WTC11 (cell line): ENCODE measurements at regions of chr1 and their contacts with region 1.

Region 1: DNA sequence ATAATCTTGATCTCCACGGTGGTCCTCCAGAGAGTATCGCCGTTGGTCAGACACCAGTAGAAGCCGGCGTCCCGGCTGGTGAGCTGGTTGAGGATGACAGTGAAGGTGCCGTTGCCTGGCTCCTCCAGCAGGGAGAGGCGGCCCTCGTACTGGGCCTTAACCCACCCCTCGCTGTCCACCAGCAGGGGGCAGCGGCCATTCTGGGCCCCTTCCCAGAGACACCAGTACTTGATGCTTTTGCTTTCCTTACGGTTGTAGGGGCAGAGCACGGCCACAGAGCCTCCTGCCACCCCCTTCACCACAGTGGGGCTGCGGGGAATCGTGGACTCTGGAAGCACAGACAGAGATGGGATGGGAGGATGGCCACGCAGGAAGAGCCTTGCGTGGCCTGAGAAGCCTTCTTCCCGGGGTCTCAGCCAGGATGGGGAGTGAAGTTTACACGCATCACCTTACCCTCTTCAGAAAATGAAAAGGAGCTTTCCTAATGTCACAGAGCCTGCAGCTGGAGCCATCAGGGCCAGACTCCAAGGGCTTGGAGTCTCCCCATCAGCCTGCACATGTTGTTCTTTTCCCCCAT is 10.7 kb downstream of the PIGR start:
- DNase-seq: peak; percentile 83
- ATAC-seq: peak; percentile 92
- H3K4me3 Mint-ChIP-seq: no peak overlapping the region
- H3K27ac Mint-ChIP-seq: no peak overlapping the region
- H3K4me1 Mint-ChIP-seq: peaks cover 5% of the 10 kb centered on the region; the same call in 1 of the 2 replicates
- H3K27me3 Mint-ChIP-seq: no peaks in the 10 kb centered on the region
- CTCF ChIP-seq: peak; percentile 59

Region 2: DNA sequence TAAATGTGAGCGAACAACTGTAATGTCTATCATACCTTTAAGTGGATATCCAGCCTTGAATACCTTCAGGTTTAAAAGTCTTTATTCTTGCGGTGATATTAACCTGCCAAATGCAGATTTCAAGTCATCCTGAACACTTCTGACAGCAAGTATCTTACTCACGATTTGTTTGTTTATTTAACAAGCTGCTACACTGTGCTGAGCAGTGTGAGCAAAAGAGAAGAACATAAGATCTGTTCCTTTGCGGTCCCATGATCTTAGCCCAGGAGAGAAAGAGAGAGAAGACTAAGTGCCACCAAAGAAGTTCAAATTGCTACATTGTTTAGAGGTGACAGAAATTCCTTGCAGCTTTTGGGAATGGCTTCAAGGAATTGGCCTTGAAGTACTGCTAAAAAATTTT is 47.9 kb before region 1 on chr1:
- CTCF ChIA-PET with region 1: no interaction called
- POLR2A ChIA-PET with region 1: no interaction called
- DNase-seq: no peak
- ATAC-seq: no peak
- H3K4me3 Mint-ChIP-seq: no peak overlapping the region
- H3K27ac Mint-ChIP-seq: no peak overlapping the region
- H3K4me1 Mint-ChIP-seq: peaks cover 19% of the 10 kb centered on the region
- H3K27me3 Mint-ChIP-seq: no peaks in the 10 kb centered on the region
- CTCF ChIP-seq: no peak

Region 3: GRCh38 chr1:206946261-206946660 is 10.7 kb after region 1 on chr1 and contains the start of gene PIGR:
- CTCF ChIA-PET with region 1: interaction called, 12 read pairs
- POLR2A ChIA-PET with region 1: no interaction called
- DNase-seq: no peak
- ATAC-seq: no peak
- H3K4me3 Mint-ChIP-seq: no peak within 1 kb of the TSS
- H3K27ac Mint-ChIP-seq: no peak within 1 kb of the TSS
- H3K4me1 Mint-ChIP-seq: no peaks in the 10 kb centered on the region
- H3K27me3 Mint-ChIP-seq: peaks cover 5% of the 10 kb centered on the region; the same call in 1 of the 2 replicates
- CTCF ChIP-seq: no peak
- total RNA-seq, gene PIGR: 1.8 to 2.2 TPM (median 1.9 TPM) in 3 replicates

Region 4: GRCh38 chr1:206962272-206962671 is 26.7 kb after region 1 on chr1:
- CTCF ChIA-PET with region 1: interaction called, 11 read pairs
- POLR2A ChIA-PET with region 1: no interaction called
- DNase-seq: no peak
- ATAC-seq: no peak
- H3K4me3 Mint-ChIP-seq: no peak overlapping the region
- H3K27ac Mint-ChIP-seq: no peak overlapping the region
- H3K4me1 Mint-ChIP-seq: no peaks in the 10 kb centered on the region
- H3K27me3 Mint-ChIP-seq: no peaks in the 10 kb centered on the region
- CTCF ChIP-seq: no peak

Region 5: GRCh38 chr1:207032528-207033017 is 97.0 kb after region 1 on chr1 and contains the start of gene C1orf116:
- CTCF ChIA-PET with region 1: interaction called, 17 read pairs
- POLR2A ChIA-PET with region 1: no interaction called
- DNase-seq: peak; percentile 70
- ATAC-seq: peak; percentile 100
- H3K4me3 Mint-ChIP-seq: peak within 1 kb of the TSS; percentile 48
- H3K27ac Mint-ChIP-seq: peak within 1 kb of the TSS; percentile 88
- H3K4me1 Mint-ChIP-seq: peaks cover 49% of the 10 kb centered on the region
- H3K27me3 Mint-ChIP-seq: no peaks in the 10 kb centered on the region
- CTCF ChIP-seq: no peak
- total RNA-seq, gene C1orf116: 2.3 to 2.7 TPM (median 2.4 TPM) in 3 replicates

Region 6: GRCh38 chr1:207069858-207070506 is 134.4 kb after region 1 on chr1:
- CTCF ChIA-PET with region 1: no interaction called
- POLR2A ChIA-PET with region 1: no interaction called
- DNase-seq: no peak
- ATAC-seq: no peak
- H3K4me3 Mint-ChIP-seq: no peak overlapping the region
- H3K27ac Mint-ChIP-seq: no peak overlapping the region
- H3K4me1 Mint-ChIP-seq: no peaks in the 10 kb centered on the region
- H3K27me3 Mint-ChIP-seq: no peaks in the 10 kb centered on the region
- CTCF ChIP-seq: no peak